ENCODE measurements at regions of chr1 and their contacts with region 1.

Region 1: GRCh38 chr1:145845514-145846161 is at the start of gene NUDT17:
- DNase-seq: peak; percentile 77

Region 2: DNA sequence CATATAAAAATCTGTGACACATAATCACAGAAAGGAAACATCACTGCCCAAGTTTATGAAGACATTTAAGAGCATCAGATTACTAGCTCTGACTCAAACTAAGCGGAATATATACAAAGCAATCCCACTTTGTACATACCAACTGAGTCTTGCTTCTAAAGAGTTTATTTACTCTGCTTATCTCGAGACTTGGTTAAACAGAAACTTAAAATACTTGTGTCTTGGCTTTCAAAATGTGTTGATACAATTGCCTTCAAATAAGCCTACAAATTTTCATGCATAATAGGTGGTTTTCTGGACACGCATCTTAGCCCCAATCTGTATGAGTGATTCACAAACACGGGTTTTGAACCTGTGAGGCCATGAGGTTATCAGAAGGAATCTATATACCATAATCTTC is 105.4 kb before region 1 on chr1:
- in situ Hi-C with region 1: loop called (anchors 25 kb)
- DNase-seq: no peak

Measured in ACHN (cell line).